PC-9 (cell line): ENCODE measurements at regions of chr6 and their contacts with region 1.

Region 1: GRCh38 chr6:21769405-21769861 is 175.9 kb downstream of the SOX4 start:
- DNase-seq: no peak
- H3K4me3 ChIP-seq: no peak overlapping the region
- H3K27ac ChIP-seq: no peak overlapping the region
- H3K4me1 ChIP-seq: peaks cover 40% of the 10 kb centered on the region
- H3K27me3 ChIP-seq: no peaks in the 10 kb centered on the region
- CTCF ChIP-seq: no peak

Region 2: GRCh38 chr6:21740376-21741124 is 28.9 kb before region 1 on chr6:
- CTCF ChIA-PET with region 1: no interaction called
- POLR2A ChIA-PET with region 1: interaction called, 4 read pairs
- intact Hi-C with region 1: loop called (anchors 2 kb)
- DNase-seq: no peak
- H3K4me3 ChIP-seq: no peak overlapping the region
- H3K27ac ChIP-seq: no peak overlapping the region
- H3K4me1 ChIP-seq: peaks cover 59% of the 10 kb centered on the region
- H3K27me3 ChIP-seq: no peaks in the 10 kb centered on the region
- CTCF ChIP-seq: no peak